ENCODE measurements at regions of chr4 and their contacts with region 1.

Region 1: GRCh38 chr4:10461091-10461849 is 4.0 kb upstream of the ZNF518B start:
- DNase-seq: peak; percentile 79 to 93
- ATAC-seq: peak; percentile 77 to 89 (median 85)
- H3K4me3 ChIP-seq: peak overlapping the region; percentile 32
- H3K4me3 Mint-ChIP-seq: peak overlapping the region; percentile 62
- H3K27ac ChIP-seq: no peak overlapping the region
- H3K27ac Mint-ChIP-seq: no peak overlapping the region
- H3K4me1 ChIP-seq: peaks cover 21% of the 10 kb centered on the region
- H3K4me1 Mint-ChIP-seq: peaks cover 10 to 15% of the 10 kb centered on the region in 2 donors
- H3K27me3 ChIP-seq: peaks cover 19% of the 10 kb centered on the region
- H3K27me3 Mint-ChIP-seq: peaks cover 34 to 48% of the 10 kb centered on the region in 2 donors
- CTCF ChIP-seq: peak; percentile 99

Region 2: DNA sequence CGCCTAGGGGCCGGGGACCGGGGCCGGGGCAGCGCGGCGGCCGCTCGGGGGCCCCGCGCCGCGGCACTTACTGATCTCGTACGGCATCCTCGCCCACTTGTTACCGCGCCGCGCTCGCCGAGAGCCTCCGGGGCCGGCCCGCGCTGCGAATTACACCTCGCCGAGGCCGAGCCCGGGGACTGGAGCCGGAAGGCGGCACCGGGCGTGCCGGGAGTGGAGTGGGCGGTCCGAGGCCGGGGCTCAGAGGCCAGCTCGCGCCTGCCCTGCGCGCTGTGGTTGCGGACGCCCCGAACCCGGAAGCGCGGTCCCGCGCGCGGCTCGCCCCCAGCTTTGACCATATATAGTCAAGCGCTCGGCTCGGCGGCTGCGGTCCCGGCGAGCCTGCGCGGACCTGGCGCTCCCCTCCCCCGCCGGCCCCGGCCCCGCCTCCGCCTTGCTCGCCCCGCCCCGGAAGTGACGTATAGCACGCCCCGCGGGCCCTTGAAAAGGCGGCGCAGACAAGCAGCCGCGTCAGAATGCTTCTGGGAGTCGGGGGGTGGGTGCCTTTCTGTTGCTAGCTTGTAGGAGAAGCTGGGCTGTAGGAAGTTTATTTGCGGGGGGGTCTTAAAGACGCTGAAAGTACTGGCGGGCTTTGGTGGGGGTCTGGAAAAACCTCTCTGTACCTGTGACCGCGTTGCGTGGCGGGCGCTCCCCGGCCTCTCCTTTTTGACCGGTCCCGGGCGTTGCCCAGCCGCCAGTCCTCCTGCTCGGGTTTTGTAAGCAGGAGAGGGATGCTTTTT is 344.5 kb before region 1 on chr4 and contains the start of gene WDR1:
- intact Hi-C with region 1: loop called (anchors 2 kb)
- DNase-seq: peak; percentile 93 to 94
- ATAC-seq: peak; percentile 83 to 93 (median 88)
- H3K4me3 ChIP-seq: peak within 1 kb of the TSS; percentile 68
- H3K4me3 Mint-ChIP-seq: peak within 1 kb of the TSS; percentile 94
- H3K27ac ChIP-seq: peak within 1 kb of the TSS; percentile 95
- H3K27ac Mint-ChIP-seq: peak within 1 kb of the TSS; percentile 98 to 99
- H3K4me1 ChIP-seq: peaks cover 49% of the 10 kb centered on the region
- H3K4me1 Mint-ChIP-seq: peaks cover 50 to 61% of the 10 kb centered on the region in 2 donors
- H3K27me3 ChIP-seq: no peaks in the 10 kb centered on the region
- H3K27me3 Mint-ChIP-seq: no peaks in the 10 kb centered on the region
- CTCF ChIP-seq: no peak
- total RNA-seq, gene WDR1: 411 to 477 (median 468) TPM

Region 3: DNA sequence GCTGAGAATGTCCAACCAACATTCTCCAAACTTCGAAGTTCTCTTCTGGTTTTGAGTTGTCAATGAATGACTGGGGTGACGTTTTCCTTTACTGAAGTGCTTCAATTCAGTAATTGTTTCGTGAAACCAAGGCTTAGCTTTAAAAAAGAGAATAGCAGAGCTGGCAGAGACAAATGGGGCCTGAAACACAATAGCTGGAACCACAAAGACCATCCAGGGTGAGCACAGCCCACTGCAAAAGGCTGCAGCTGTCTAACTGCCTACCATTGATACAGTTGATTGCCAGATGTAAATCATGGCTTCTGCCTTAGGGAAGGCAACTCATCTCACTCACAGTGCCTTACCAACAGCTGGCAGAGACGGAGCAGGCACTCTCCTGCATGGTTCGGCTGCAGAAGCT is 74.6 kb after region 1 on chr4:
- intact Hi-C with region 1: loop called (anchors 1 kb)
- DNase-seq: no peak
- ATAC-seq: no peak
- H3K4me3 ChIP-seq: no peak overlapping the region
- H3K4me3 Mint-ChIP-seq: no peak overlapping the region
- H3K27ac ChIP-seq: no peak overlapping the region
- H3K27ac Mint-ChIP-seq: no peak overlapping the region
- H3K4me1 ChIP-seq: no peaks in the 10 kb centered on the region
- H3K4me1 Mint-ChIP-seq: no peaks in the 10 kb centered on the region
- H3K27me3 ChIP-seq: no peaks in the 10 kb centered on the region
- H3K27me3 Mint-ChIP-seq: peaks cover 0 to 3% of the 10 kb centered on the region in 2 donors
- CTCF ChIP-seq: no peak

Region 4: GRCh38 chr4:10554694-10555093 is 93.4 kb after region 1 on chr4:
- intact Hi-C with region 1: loop called (anchors 1 kb)
- DNase-seq: peak in 1 of 2 donors; percentile 68
- ATAC-seq: peak; percentile 62 to 77 (median 69)
- H3K4me3 ChIP-seq: no peak overlapping the region
- H3K4me3 Mint-ChIP-seq: no peak overlapping the region
- H3K27ac ChIP-seq: no peak overlapping the region
- H3K27ac Mint-ChIP-seq: no peak overlapping the region
- H3K4me1 ChIP-seq: no peaks in the 10 kb centered on the region
- H3K4me1 Mint-ChIP-seq: peaks cover 8% of the 10 kb centered on the region in 2 donors
- H3K27me3 ChIP-seq: no peaks in the 10 kb centered on the region
- H3K27me3 Mint-ChIP-seq: no peaks in the 10 kb centered on the region
- CTCF ChIP-seq: peak; percentile 84

Region 5: GRCh38 chr4:11471618-11472017 is 1010.3 kb after region 1 on chr4:
- intact Hi-C with region 1: loop called (anchors 10 kb)
- DNase-seq: peak; percentile 47 to 82
- ATAC-seq: peak; percentile 97 to 99 (median 98)
- H3K4me3 ChIP-seq: peak overlapping the region; percentile 36
- H3K4me3 Mint-ChIP-seq: peak overlapping the region; percentile 92
- H3K27ac ChIP-seq: peak overlapping the region; percentile 84
- H3K27ac Mint-ChIP-seq: peak overlapping the region; percentile 93 to 97
- H3K4me1 ChIP-seq: peaks cover 13% of the 10 kb centered on the region
- H3K4me1 Mint-ChIP-seq: peaks cover 22 to 28% of the 10 kb centered on the region in 2 donors
- H3K27me3 ChIP-seq: no peaks in the 10 kb centered on the region
- H3K27me3 Mint-ChIP-seq: peaks cover 0 to 2% of the 10 kb centered on the region in 2 donors
- CTCF ChIP-seq: no peak

Measured in natural killer cell (primary cell).